ENCODE measurements at regions of chr12 and their contacts with region 1.

Region 1: GRCh38 chr12:33825986-33826602 is 196.2 kb upstream of the ALG10 start:
- DNase-seq: no peak
- ATAC-seq: no peak
- H3K4me3 ChIP-seq: no peak overlapping the region
- H3K27ac ChIP-seq: no peak overlapping the region
- H3K4me1 ChIP-seq: no peaks in the 10 kb centered on the region
- H3K27me3 ChIP-seq: no peaks in the 10 kb centered on the region
- CTCF ChIP-seq: no peak
- POLR2A ChIP-seq: no peak
- RAD21 ChIP-seq: no peak

Region 2: DNA sequence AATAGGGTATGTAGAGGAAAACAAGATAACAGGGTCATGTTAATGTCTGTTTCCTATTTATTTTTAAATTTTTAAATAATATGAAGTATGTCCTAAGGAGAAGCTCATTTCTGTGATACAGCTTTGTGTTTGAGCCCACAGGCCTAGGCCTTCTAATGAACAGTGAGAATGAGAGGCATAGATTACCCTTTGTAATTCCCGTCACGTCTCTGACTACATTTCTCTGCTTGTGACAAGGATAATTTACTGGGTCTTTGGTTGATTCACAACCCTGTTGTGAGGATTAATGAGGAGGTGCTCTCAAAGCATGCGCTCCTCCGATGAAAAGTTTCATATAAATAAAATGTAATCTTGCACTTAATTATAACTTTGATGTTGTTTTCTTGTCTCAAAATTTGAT is 442.6 kb before region 1 on chr12:
- CTCF ChIA-PET with region 1: no interaction called
- POLR2A ChIA-PET with region 1: no interaction called
- dilution Hi-C with region 1: no loop called
- in situ Hi-C with region 1: no loop called
- intact Hi-C with region 1: no loop called
- DNase-seq: no peak
- ATAC-seq: no peak
- H3K4me3 ChIP-seq: no peak overlapping the region
- H3K27ac ChIP-seq: no peak overlapping the region
- H3K4me1 ChIP-seq: no peaks in the 10 kb centered on the region
- H3K27me3 ChIP-seq: no peaks in the 10 kb centered on the region
- CTCF ChIP-seq: no peak
- POLR2A ChIP-seq: no peak
- RAD21 ChIP-seq: no peak

Region 3: DNA sequence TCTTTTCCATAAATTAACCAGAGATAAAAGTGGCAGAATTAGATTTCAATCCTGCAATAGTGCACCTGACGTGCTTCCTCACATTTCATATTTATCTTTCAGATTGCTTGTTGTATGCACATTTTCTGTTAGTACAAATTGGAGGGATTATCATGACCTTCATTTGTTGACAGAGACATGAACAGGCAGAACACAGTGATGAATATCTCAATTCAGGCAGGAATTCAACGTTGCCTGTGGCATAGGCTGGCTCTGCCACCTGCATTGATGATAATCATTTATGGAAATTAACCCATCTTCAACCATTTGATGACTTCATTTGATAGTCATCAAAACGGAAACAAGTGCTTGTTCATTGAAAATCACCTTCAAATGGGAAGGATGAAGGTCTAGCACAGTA is 60.5 kb before region 1 on chr12:
- CTCF ChIA-PET with region 1: no interaction called
- POLR2A ChIA-PET with region 1: no interaction called
- dilution Hi-C with region 1: no loop called
- in situ Hi-C with region 1: loop called (anchors 10 kb)
- intact Hi-C with region 1: no loop called
- DNase-seq: no peak
- ATAC-seq: no peak
- H3K4me3 ChIP-seq: no peak overlapping the region
- H3K27ac ChIP-seq: no peak overlapping the region
- H3K4me1 ChIP-seq: no peaks in the 10 kb centered on the region
- H3K27me3 ChIP-seq: no peaks in the 10 kb centered on the region
- CTCF ChIP-seq: no peak
- POLR2A ChIP-seq: no peak
- RAD21 ChIP-seq: no peak

Region 4: GRCh38 chr12:33988913-33989312 is 162.8 kb after region 1 on chr12:
- CTCF ChIA-PET with region 1: no interaction called
- POLR2A ChIA-PET with region 1: no interaction called
- dilution Hi-C with region 1: no loop called
- in situ Hi-C with region 1: loop called (anchors 25 kb)
- intact Hi-C with region 1: no loop called
- DNase-seq: no peak
- ATAC-seq: no peak
- H3K4me3 ChIP-seq: no peak overlapping the region
- H3K27ac ChIP-seq: no peak overlapping the region
- H3K4me1 ChIP-seq: no peaks in the 10 kb centered on the region
- H3K27me3 ChIP-seq: no peaks in the 10 kb centered on the region
- CTCF ChIP-seq: no peak
- POLR2A ChIP-seq: no peak
- RAD21 ChIP-seq: no peak

Region 5: DNA sequence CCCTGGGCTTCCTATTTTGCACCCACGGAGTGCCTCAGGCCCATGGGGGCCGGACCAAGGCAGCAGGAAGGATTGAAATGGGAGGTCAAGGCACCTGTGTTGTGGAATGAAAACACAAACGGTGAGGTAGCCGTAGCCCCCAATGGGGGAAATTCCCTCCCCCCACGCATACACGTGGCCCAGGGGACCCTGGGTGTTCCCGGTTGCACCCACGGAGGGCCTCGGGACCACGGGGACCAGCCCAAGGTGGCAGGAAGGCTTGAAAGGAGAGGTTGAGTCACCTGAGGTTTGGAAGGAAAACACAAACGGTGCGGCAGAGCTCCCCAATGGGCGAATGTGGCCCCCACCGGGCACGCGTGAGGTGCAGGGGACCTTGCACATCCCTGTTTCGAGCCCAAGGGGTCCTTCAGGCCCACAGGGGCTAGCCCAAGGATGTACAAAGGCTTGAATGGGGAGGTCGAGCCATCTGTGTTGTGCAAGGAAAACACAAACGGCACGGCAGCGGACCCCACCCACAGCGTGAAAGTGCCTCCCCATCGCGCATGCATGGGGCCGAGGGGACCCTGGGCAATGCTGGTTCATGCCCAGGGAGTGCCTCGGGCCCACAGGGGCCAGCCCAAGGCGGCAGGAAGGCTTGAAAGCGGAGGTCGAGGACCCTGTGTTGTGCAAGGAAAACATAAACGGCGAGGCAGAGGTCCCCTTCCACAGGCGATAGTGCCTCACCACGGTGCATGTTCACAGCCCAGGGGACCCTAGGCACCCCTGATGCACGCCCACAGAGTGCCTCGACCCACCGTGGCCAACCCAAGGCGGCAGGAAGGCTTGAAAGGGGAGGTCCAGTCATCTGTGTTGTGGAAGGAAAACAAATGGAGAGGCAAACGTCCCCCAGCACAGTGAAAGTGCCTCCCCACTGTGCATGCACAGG is 572.9 kb after region 1 on chr12:
- CTCF ChIA-PET with region 1: no interaction called
- POLR2A ChIA-PET with region 1: no interaction called
- dilution Hi-C with region 1: no loop called
- in situ Hi-C with region 1: no loop called
- intact Hi-C with region 1: no loop called
- DNase-seq: no peak
- ATAC-seq: no peak
- H3K4me3 ChIP-seq: no peak overlapping the region
- H3K27ac ChIP-seq: no peak overlapping the region
- H3K4me1 ChIP-seq: no peaks in the 10 kb centered on the region
- H3K27me3 ChIP-seq: no peaks in the 10 kb centered on the region
- CTCF ChIP-seq: no peak
- POLR2A ChIP-seq: no peak
- RAD21 ChIP-seq: no peak

Measured in IMR-90 (cell line).